CD4-positive, alpha-beta memory T cell (primary cell): ENCODE measurements at regions of chr1 and their contacts with region 1.

Region 1: GRCh38 chr1:27436204-27437159 is 44.1 kb downstream of the GPR3 start:
- DNase-seq: peak; percentile 39 to 59 (median 43)
- H3K4me3 ChIP-seq: peak overlapping the region; percentile 25 to 45
- H3K4me3 Mint-ChIP-seq: peak overlapping the region; percentile 59 to 85 (median 78)
- H3K27ac ChIP-seq: peak overlapping the region; percentile 40
- H3K27ac Mint-ChIP-seq: peak overlapping the region; percentile 76 to 97 (median 90)
- H3K4me1 ChIP-seq: peaks cover 85% of the 10 kb centered on the region
- H3K4me1 Mint-ChIP-seq: peaks cover 56 to 81% (median 68%) of the 10 kb centered on the region in 4 donors
- H3K27me3 ChIP-seq: no peaks in the 10 kb centered on the region
- H3K27me3 Mint-ChIP-seq: no peaks in the 10 kb centered on the region

Region 2: GRCh38 chr1:27321813-27322577 is 114.5 kb before region 1 on chr1 and contains the start of gene TMEM222:
- CTCF ChIA-PET with region 1: no interaction called
- POLR2A ChIA-PET with region 1: no interaction called
- intact Hi-C with region 1: no loop called
- DNase-seq: peak; percentile 97
- H3K4me3 ChIP-seq: peak within 1 kb of the TSS; percentile 89 to 97
- H3K4me3 Mint-ChIP-seq: peak within 1 kb of the TSS; percentile 95 to 99 (median 98)
- H3K27ac ChIP-seq: peak within 1 kb of the TSS; percentile 95
- H3K27ac Mint-ChIP-seq: peak within 1 kb of the TSS; percentile 95 to 98 (median 96)
- H3K4me1 ChIP-seq: peaks cover 53% of the 10 kb centered on the region
- H3K4me1 Mint-ChIP-seq: peaks cover 27 to 58% (median 44%) of the 10 kb centered on the region in 4 donors
- H3K27me3 ChIP-seq: peaks cover 5% of the 10 kb centered on the region
- H3K27me3 Mint-ChIP-seq: peaks cover 3 to 4% of the 10 kb centered on the region in 2 donors
- total RNA-seq, gene TMEM222: 44.4 to 45.4 TPM

Region 3: DNA sequence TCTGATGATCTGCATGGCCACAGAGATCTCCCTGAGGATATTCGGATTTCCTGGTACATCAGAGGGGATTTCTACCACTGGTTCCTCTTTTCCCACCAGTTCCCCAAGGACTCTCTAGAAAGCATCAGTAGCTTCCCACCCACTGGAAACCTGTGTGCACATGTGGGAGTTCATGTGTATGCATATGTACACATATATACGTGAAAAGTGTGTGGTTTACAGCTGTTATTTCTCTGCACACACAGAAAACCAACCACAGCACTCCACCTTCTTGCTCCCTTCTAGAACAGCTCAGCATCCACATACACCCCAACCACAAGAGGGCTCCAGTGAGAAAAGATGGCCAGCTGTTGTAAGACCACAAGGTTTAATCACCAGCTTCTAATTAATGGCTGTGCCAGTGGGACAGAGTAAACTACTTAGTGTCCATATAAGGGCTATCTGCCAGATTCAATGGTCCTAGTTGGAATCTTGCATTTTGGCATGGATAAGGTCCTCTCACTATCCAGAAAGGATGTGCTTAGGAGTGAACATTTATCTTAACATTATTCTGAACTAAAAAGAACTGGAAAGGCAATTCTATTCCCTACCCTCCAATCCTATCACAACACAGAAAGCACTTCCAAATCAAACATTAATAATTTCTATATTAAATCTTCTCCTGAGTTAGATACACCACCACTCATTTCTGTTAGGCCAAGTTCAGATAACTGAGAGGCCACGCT is 19.9 kb before region 1 on chr1:
- CTCF ChIA-PET with region 1: interaction called, 21 read pairs
- POLR2A ChIA-PET with region 1: interaction called, 4 read pairs
- intact Hi-C with region 1: no loop called
- DNase-seq: peak; percentile 51 to 67 (median 60)
- H3K4me3 ChIP-seq: no peak overlapping the region
- H3K4me3 Mint-ChIP-seq: no peak overlapping the region
- H3K27ac ChIP-seq: no peak overlapping the region
- H3K27ac Mint-ChIP-seq: peak overlapping the region; percentile 29 to 75 (median 42)
- H3K4me1 ChIP-seq: peaks cover 42% of the 10 kb centered on the region
- H3K4me1 Mint-ChIP-seq: peaks cover 19 to 42% (median 30%) of the 10 kb centered on the region in 4 donors
- H3K27me3 ChIP-seq: no peaks in the 10 kb centered on the region
- H3K27me3 Mint-ChIP-seq: no peaks in the 10 kb centered on the region

Region 4: GRCh38 chr1:27455139-27455811 is 18.8 kb after region 1 on chr1:
- CTCF ChIA-PET with region 1: interaction called, 7 read pairs
- POLR2A ChIA-PET with region 1: interaction called, 18 read pairs
- intact Hi-C with region 1: loop called (anchors 2 kb)
- DNase-seq: peak; percentile 26 to 50 (median 33)
- H3K4me3 ChIP-seq: no peak overlapping the region
- H3K4me3 Mint-ChIP-seq: peak overlapping the region; percentile 30 to 75 (median 65)
- H3K27ac ChIP-seq: peak overlapping the region; percentile 40
- H3K27ac Mint-ChIP-seq: peak overlapping the region; percentile 27 to 89 (median 68)
- H3K4me1 ChIP-seq: peaks cover 47% of the 10 kb centered on the region
- H3K4me1 Mint-ChIP-seq: peaks cover 34 to 60% (median 44%) of the 10 kb centered on the region in 4 donors
- H3K27me3 ChIP-seq: no peaks in the 10 kb centered on the region
- H3K27me3 Mint-ChIP-seq: no peaks in the 10 kb centered on the region

Region 5: GRCh38 chr1:28259307-28260167 is 823.1 kb after region 1 on chr1 and contains the start of gene SESN2:
- CTCF ChIA-PET with region 1: no interaction called
- POLR2A ChIA-PET with region 1: no interaction called
- intact Hi-C with region 1: no loop called
- DNase-seq: peak; percentile 99
- H3K4me3 ChIP-seq: peak within 1 kb of the TSS; percentile 69 to 82
- H3K4me3 Mint-ChIP-seq: peak within 1 kb of the TSS; percentile 77 to 90 (median 82)
- H3K27ac ChIP-seq: peak within 1 kb of the TSS; percentile 67
- H3K27ac Mint-ChIP-seq: peak within 1 kb of the TSS; percentile 72 to 88 (median 84)
- H3K4me1 ChIP-seq: peaks cover 59% of the 10 kb centered on the region
- H3K4me1 Mint-ChIP-seq: peaks cover 29 to 58% (median 43%) of the 10 kb centered on the region in 4 donors
- H3K27me3 ChIP-seq: no peaks in the 10 kb centered on the region
- H3K27me3 Mint-ChIP-seq: no peaks in the 10 kb centered on the region
- total RNA-seq, gene SESN2: 5.7 to 6.4 TPM